Common myeloid progenitor, CD34-positive (primary cell): ENCODE measurements at regions of chr12 and their contacts with region 1.

Region 1: GRCh38 chr12:53065975-53066931 is 12.9 kb downstream of the SPRYD3 start:
- DNase-seq: peak; percentile 52 to 60 (median 53)
- H3K4me3 ChIP-seq: no peak overlapping the region
- H3K27ac ChIP-seq: no peak overlapping the region
- H3K4me1 ChIP-seq: peaks cover 0 to 9% (median 0%) of the 10 kb centered on the region in 4 experiments
- H3K27me3 ChIP-seq: no peaks in the 10 kb centered on the region

Region 2: DNA sequence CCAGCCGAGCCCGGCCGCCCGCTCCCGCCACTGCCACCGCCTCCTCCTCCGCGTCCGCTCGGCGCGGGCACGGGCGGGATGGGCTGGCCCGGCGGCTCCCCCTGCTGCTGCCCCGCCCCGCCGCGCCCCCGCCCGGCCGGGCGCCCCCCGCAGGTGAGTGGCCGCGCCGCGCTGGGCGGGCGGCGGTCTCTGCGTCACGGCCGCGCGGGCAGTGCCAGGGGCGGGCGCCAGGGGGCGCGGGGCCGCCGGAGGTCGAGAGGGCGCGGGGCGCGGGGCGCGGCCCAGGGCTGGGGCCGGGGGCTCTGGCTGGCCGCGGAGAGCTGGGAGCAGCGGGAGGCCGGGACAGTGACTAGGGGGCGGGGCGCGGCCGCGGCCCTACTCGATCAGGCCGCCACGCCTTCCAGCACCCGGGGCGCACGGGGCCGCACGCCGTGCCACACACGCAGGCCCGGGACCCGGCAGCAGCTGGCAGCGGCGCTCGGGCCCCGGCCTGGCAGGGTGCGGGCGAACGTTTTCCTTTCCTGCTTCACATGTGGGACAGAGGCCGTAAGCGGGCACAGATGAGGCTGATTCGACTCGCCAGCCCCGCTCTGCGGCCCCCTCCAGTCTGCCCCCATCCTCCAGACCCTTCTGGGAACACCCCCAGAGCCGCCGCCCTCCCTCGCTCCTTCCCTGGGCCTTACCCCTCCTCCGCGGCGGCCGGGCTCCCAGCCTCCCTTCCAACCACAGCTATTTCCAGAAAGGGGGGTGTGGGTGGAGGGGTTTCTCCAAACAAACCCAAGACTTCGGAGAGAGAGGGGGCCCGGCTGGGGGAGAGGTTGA is 18.8 kb before region 1 on chr12:
- CTCF ChIA-PET with region 1: interaction called, 10 read pairs
- POLR2A ChIA-PET with region 1: no interaction called
- DNase-seq: peak; percentile 46 to 76 (median 69)
- H3K4me3 ChIP-seq: peak overlapping the region; percentile 48 to 89 (median 79)
- H3K27ac ChIP-seq: peak overlapping the region in 1 of 2 experiments; percentile 34
- H3K4me1 ChIP-seq: peaks cover 0 to 29% (median 20%) of the 10 kb centered on the region in 4 experiments
- H3K27me3 ChIP-seq: peaks cover 0 to 1% (median 0%) of the 10 kb centered on the region in 5 experiments

Region 3: DNA sequence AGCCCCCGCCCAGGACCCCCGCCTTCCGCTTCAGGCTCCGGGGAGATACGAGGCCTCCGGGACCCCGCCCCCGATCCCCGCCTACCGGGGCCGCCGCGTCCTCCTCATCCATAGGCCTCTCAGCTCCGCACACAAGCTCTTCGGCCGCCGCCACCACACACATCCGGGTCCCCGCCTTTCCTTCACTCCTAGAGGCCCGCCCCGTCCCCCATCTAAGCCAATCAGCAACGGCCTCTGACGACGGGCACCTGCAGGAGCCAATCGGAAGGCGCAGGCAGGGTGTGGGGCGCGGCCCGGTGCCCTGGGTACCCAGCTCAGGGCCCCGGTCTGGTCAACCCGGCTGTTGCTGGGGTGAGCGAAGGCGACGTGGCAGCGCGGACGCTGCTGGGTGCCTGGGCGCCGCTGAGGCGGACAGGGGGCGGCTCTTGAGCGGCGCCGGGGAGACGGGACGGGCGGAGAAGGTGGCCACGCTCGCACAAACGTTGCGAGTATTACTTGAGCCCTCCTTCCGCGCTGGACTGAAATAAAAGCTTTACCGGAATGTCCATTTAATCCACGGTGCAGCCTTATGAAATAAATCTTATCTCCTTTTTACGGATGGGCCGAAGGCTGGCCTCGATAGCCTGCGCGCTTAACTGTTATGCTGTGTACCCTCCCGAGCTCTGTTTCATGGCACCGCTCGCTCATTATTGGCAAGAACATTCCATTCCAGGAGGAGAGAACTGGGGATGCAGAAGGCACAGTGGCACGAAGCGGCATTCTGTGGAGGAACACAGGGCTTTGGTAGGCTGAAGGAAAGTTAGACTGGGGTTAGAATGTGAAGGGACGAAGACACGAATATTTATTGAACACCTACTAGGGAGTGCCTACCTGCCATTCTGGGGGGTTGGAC is 13.2 kb after region 1 on chr12 and contains the start of gene SPRYD3:
- CTCF ChIA-PET with region 1: interaction called, 113 read pairs
- POLR2A ChIA-PET with region 1: interaction called, 6 read pairs
- DNase-seq: peak; percentile 94 to 98 (median 97)
- H3K4me3 ChIP-seq: peak within 1 kb of the TSS; percentile 55 to 89 (median 77)
- H3K27ac ChIP-seq: peak within 1 kb of the TSS; percentile 66 to 88
- H3K4me1 ChIP-seq: peaks cover 3 to 16% (median 10%) of the 10 kb centered on the region in 4 experiments
- H3K27me3 ChIP-seq: no peaks in the 10 kb centered on the region

Region 4: GRCh38 chr12:53098982-53099651 is 32.9 kb after region 1 on chr12:
- CTCF ChIA-PET with region 1: interaction called, 361 read pairs
- POLR2A ChIA-PET with region 1: interaction called, 9 read pairs
- DNase-seq: peak; percentile 88 to 95 (median 95)
- H3K4me3 ChIP-seq: peak overlapping the region in 3 of 7 experiments; percentile 19 to 77 (median 20)
- H3K27ac ChIP-seq: no peak overlapping the region
- H3K4me1 ChIP-seq: peaks cover 7 to 56% (median 50%) of the 10 kb centered on the region in 4 experiments
- H3K27me3 ChIP-seq: no peaks in the 10 kb centered on the region

Region 5: DNA sequence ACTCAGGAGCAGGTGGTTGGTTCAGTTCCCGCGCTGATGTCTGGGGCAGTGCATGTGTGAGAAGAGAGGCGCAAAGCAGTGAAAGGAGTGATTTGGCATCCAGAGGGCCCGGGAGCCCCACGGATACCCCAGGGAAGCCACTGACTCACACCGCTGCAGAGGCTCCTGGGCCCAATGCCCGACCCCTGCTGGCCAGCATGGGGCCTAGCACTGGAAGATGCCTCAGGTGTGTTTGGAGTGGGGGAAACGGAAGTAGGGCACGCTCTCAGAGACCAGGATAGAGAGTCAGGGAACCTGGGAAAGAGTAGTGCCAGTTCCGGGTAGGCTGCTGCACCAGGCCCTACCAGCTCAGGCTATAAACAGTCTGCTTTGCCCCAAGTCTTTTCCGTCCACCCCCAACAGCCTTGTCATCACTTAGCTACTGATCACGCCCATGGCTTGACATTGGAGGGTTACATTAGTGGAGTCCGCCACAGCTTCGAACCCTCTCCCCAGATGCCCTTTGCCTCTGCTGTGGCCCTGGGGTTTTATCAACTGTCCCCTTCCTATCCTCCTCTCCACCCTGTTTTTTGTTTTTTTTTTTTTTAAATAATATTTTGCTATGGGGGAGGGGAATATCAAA is 124.0 kb after region 1 on chr12:
- CTCF ChIA-PET with region 1: interaction called, 13 read pairs
- POLR2A ChIA-PET with region 1: no interaction called
- DNase-seq: peak in 2 of 3 donors; percentile 54 to 65
- H3K4me3 ChIP-seq: no peak overlapping the region
- H3K27ac ChIP-seq: no peak overlapping the region
- H3K4me1 ChIP-seq: peaks cover 0 to 2% (median 0%) of the 10 kb centered on the region in 4 experiments
- H3K27me3 ChIP-seq: no peaks in the 10 kb centered on the region